ENCODE measurements at regions of chr17 and their contacts with region 1.

Region 1: DNA sequence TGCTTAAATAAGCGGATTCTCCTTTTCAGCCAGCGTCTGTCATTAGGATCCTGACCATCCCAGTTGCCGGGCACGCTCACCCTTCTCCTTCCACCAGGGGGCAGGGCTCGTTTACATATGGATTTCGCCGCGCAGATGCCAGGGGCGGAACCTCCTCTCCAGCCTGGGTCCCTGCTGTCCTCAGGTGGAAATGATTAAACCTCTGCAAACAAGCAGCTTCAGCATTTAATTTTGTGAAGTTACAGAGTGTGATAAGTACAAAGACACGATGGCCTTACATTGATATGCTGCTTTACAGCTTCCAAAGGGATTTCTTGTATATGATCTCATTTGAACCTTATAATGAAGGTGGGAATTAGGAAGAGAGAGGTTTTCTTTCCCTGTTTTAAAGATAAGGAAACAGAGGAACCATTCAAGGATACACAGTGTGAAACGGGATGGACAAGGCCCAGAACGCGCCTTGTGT is 3.9 kb upstream of the KRT28 start:
- DNase-seq: peak; percentile 71
- H3K4me3 ChIP-seq: no peak overlapping the region
- H3K27ac ChIP-seq: no peak overlapping the region
- H3K4me1 ChIP-seq: no peaks in the 10 kb centered on the region
- H3K27me3 ChIP-seq: peaks cover 20 to 39% of the 10 kb centered on the region in 2 experiments
- CTCF ChIP-seq: peak; percentile 85 to 88
- POLR2A ChIP-seq: no peak

Region 2: GRCh38 chr17:40632216-40632615 is 171.4 kb before region 1 on chr17:
- CTCF ChIA-PET with region 1: no interaction called
- POLR2A ChIA-PET with region 1: no interaction called
- dilution Hi-C with region 1: no loop called
- intact Hi-C with region 1: no loop called
- DNase-seq: no peak
- H3K4me3 ChIP-seq: no peak overlapping the region
- H3K27ac ChIP-seq: no peak overlapping the region
- H3K4me1 ChIP-seq: no peaks in the 10 kb centered on the region
- H3K27me3 ChIP-seq: no peaks in the 10 kb centered on the region
- CTCF ChIP-seq: no peak
- POLR2A ChIP-seq: no peak

Region 3: DNA sequence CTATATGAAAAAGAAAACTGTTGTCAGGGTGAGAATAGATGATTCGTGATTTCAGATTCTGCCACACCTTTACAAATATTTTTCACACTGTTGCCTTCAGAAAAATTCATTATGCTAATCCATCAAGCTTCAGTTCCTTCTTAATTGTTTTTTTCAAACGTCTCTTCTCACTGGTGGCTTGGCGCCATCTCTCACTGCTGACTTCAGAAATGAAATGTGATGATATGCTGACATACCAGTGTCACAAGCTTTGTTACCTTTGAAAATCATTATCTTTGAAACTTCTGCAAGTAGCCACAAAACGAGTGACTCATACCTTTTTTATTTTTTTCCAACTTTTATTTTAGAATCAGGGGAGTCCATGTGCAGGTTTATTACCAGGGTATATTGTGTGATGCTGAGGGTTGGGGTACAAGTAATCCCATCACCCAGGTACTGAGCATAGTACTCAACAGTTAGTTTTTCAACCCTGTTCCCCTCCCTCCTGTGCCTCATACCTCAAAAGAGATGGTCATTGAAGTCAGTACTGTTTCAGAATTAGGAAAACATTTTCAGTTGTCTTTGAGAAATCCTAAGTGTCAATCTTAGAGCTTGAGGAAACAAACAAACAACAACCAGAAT is 124.6 kb before region 1 on chr17:
- CTCF ChIA-PET with region 1: no interaction called
- POLR2A ChIA-PET with region 1: no interaction called
- dilution Hi-C with region 1: no loop called
- intact Hi-C with region 1: no loop called
- DNase-seq: no peak
- H3K4me3 ChIP-seq: no peak overlapping the region
- H3K27ac ChIP-seq: no peak overlapping the region
- H3K4me1 ChIP-seq: no peaks in the 10 kb centered on the region
- H3K27me3 ChIP-seq: peaks cover 1 to 14% of the 10 kb centered on the region in 2 experiments
- CTCF ChIP-seq: no peak
- POLR2A ChIP-seq: no peak

Region 4: DNA sequence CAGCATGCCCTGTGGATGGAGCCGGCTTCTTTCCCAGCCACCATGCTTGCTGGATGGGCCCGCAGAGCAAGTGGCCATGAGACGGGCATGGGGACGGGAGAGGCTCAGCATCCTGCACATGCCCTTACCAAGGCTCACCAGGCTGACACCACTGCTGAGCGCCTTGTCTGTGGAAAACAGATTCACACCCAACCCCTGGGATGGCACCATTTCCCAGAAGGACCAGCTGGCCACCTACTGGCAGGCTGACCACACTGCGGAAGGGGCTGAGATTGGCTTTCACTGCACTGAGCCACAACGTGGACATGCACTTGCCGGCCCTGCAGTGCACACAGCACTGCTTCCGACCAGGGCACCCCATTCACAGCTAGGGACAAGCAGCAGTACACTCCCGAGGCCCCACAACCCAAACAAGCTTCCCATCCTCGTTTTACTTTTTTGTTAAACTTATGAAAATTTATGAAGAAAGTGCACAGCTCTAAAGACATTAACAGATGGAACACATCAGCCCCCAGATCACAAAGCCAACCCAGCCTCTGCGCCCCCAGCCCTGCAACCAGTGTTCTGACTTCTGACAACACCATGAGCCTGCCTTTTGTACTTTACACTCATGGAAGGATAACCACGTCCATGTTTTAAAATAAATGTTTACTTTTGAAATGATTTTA is 525.8 kb after region 1 on chr17:
- CTCF ChIA-PET with region 1: no interaction called
- POLR2A ChIA-PET with region 1: no interaction called
- dilution Hi-C with region 1: no loop called
- intact Hi-C with region 1: loop called (anchors 1 kb)
- DNase-seq: peak; percentile 44
- H3K4me3 ChIP-seq: no peak overlapping the region
- H3K27ac ChIP-seq: no peak overlapping the region
- H3K4me1 ChIP-seq: no peaks in the 10 kb centered on the region
- H3K27me3 ChIP-seq: no peaks in the 10 kb centered on the region
- CTCF ChIP-seq: peak; percentile 77 to 87
- POLR2A ChIP-seq: no peak

Region 5: GRCh38 chr17:41792845-41793783 is 989.5 kb after region 1 on chr17:
- CTCF ChIA-PET with region 1: no interaction called
- POLR2A ChIA-PET with region 1: no interaction called
- dilution Hi-C with region 1: no loop called
- intact Hi-C with region 1: no loop called
- DNase-seq: peak; percentile 69
- H3K4me3 ChIP-seq: no peak overlapping the region
- H3K27ac ChIP-seq: peak overlapping the region; percentile 51
- H3K4me1 ChIP-seq: peaks cover 16% of the 10 kb centered on the region
- H3K27me3 ChIP-seq: peaks cover 0 to 7% of the 10 kb centered on the region in 2 experiments
- CTCF ChIP-seq: no peak
- POLR2A ChIP-seq: no peak

Measured in endothelial cell of umbilical vein (primary cell).